A549 (cell line): ENCODE measurements at regions of chr22 and their contacts with region 1.

Region 1: GRCh38 chr22:46367707-46368191 is 32.2 kb downstream of the TRMU start:
- DNase-seq: peak; percentile 64
- ATAC-seq: peak; percentile 75 to 93
- H3K4me3 ChIP-seq: no peak overlapping the region
- H3K27ac ChIP-seq: peak overlapping the region; percentile 48 to 80; a peak in 5 of 6 replicates
- H3K4me1 ChIP-seq: peaks cover 19% of the 10 kb centered on the region
- CTCF ChIP-seq: peak; percentile 70
- EP300 ChIP-seq: no peak
- POLR2A ChIP-seq: no peak
- RAD21 ChIP-seq: peak; percentile 82 to 83

Region 2: GRCh38 chr22:46267431-46268279 is 100.1 kb before region 1 on chr22 and contains the start of gene TTC38:
- CTCF ChIA-PET with region 1: no interaction called
- POLR2A ChIA-PET with region 1: no interaction called
- DNase-seq: peak; percentile 77 to 87
- ATAC-seq: peak; percentile 98
- H3K4me3 ChIP-seq: peak within 1 kb of the TSS; percentile 76
- H3K27ac ChIP-seq: peak within 1 kb of the TSS; percentile 82 to 95
- H3K4me1 ChIP-seq: peaks cover 18% of the 10 kb centered on the region; the same call in 1 of the 3 replicates
- CTCF ChIP-seq: no peak
- EP300 ChIP-seq: no peak
- POLR2A ChIP-seq: peak; percentile 53
- RAD21 ChIP-seq: no peak
- polyA plus RNA-seq, gene TTC38: 12.4 and 17.3 TPM in 2 replicates

Region 3: DNA sequence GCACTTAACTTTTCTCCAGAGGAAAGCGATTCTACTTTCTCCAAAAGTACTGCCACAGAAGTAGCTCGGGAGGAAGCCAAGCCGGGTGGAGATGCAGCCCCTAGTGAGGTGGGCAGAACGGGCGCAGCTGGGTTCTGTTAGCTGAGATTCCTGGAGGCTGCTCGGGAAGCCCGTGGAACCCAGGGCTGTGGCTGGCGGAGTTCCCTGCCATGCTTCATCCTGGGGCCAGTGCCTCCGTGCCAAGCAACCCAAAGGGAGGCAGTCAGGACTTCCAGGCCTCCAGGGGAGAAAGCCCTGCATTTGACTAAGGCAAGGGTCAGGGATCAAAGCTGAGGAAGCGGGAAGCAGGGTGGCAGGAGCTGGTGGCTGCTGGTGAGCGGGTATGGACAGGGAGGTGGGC is 39.0 kb before region 1 on chr22:
- CTCF ChIA-PET with region 1: no interaction called
- POLR2A ChIA-PET with region 1: no interaction called
- DNase-seq: no peak
- ATAC-seq: no peak
- H3K4me3 ChIP-seq: no peak overlapping the region
- H3K27ac ChIP-seq: no peak overlapping the region
- H3K4me1 ChIP-seq: no peaks in the 10 kb centered on the region
- CTCF ChIP-seq: no peak
- EP300 ChIP-seq: no peak
- POLR2A ChIP-seq: no peak
- RAD21 ChIP-seq: no peak

Region 4: GRCh38 chr22:46377566-46378425 is 10.0 kb after region 1 on chr22:
- CTCF ChIA-PET with region 1: interaction called, 18 read pairs
- POLR2A ChIA-PET with region 1: no interaction called
- DNase-seq: peak; percentile 89 to 92
- ATAC-seq: peak; percentile 74 to 82
- H3K4me3 ChIP-seq: no peak overlapping the region
- H3K27ac ChIP-seq: peak overlapping the region; percentile 91 to 93
- H3K4me1 ChIP-seq: peaks cover 51% of the 10 kb centered on the region
- CTCF ChIP-seq: no peak
- EP300 ChIP-seq: peak; percentile 23 to 69; a peak in 2 of 5 replicates
- POLR2A ChIP-seq: no peak
- RAD21 ChIP-seq: no peak

Region 5: GRCh38 chr22:46437671-46438440 is 70.1 kb after region 1 on chr22:
- CTCF ChIA-PET with region 1: interaction called, 12 read pairs
- POLR2A ChIA-PET with region 1: no interaction called
- DNase-seq: no peak
- ATAC-seq: no peak
- H3K4me3 ChIP-seq: no peak overlapping the region
- H3K27ac ChIP-seq: no peak overlapping the region
- H3K4me1 ChIP-seq: peaks cover 8% of the 10 kb centered on the region; the same call in 1 of the 3 replicates
- CTCF ChIP-seq: no peak
- EP300 ChIP-seq: no peak
- POLR2A ChIP-seq: no peak
- RAD21 ChIP-seq: no peak

Region 6: GRCh38 chr22:46528121-46528610 is 160.4 kb after region 1 on chr22:
- CTCF ChIA-PET with region 1: interaction called, 46 read pairs
- POLR2A ChIA-PET with region 1: interaction called, 8 read pairs
- DNase-seq: peak; percentile 84 to 93
- ATAC-seq: peak; percentile 83 to 86
- H3K4me3 ChIP-seq: 0 out of 3 replicates have a peak overlapping the region, but pooled peaks have one; percentile 22
- H3K27ac ChIP-seq: peak overlapping the region; percentile 91 to 99
- H3K4me1 ChIP-seq: peaks cover 85% of the 10 kb centered on the region
- CTCF ChIP-seq: no peak
- EP300 ChIP-seq: peak; percentile 65 to 78; a peak in 3 of 5 replicates
- POLR2A ChIP-seq: no peak
- RAD21 ChIP-seq: peak; percentile 8 to 25; a peak in 1 of 5 replicates

Region 7: DNA sequence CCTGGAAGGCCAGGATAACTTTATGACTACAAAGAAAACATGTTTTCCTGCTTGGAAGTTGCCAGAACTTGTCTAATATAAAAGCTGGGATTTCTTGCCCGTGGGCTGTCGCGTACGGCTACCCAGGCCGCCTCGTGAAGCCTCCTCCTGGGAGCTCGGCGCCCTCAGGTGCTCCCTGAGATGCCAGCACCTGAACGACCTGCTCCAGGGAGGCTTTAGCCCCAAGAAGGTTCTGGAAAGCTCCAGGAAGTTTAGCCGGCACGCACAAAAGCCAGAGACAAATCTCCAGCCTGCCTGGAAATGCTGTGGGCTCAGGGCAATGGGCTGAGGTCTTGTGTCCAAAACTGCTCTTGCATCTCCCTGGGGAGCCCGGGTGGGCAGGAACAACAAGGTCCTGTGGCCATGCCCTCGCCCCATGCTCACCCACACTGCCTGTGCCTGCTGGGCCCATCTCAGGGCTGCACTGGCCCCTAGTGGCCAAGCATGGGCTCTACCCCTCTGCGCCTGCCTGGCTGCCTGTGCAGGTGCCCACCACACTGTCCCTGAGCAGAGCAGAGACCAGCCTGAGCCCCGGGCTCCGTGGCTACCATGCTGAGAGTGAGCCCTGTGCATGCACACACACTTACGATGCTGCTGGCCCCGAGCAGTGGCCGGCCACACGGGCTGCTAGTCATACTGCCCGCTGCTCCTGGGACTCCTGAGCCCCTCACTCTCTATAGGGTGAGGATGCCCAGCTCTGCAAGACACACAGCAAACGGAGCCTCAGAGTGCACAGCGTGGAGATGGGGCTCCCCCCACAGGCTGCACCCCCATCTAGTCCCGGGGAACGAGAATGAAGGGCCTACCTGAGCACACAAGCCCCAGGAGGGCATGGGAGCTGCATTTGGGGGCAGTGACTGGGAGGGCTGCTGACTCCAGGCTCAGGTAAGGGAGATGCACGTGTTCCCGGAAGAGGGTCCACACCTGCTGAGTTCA is 174.5 kb after region 1 on chr22:
- CTCF ChIA-PET with region 1: interaction called, 171 read pairs
- POLR2A ChIA-PET with region 1: interaction called, 3 read pairs
- DNase-seq: peak; percentile 72 to 83
- ATAC-seq: peak; percentile 87 to 93
- H3K4me3 ChIP-seq: no peak overlapping the region
- H3K27ac ChIP-seq: peak overlapping the region; percentile 47 to 78; a peak in 5 of 6 replicates
- H3K4me1 ChIP-seq: peaks cover 41% of the 10 kb centered on the region
- CTCF ChIP-seq: peak; percentile 81
- EP300 ChIP-seq: no peak
- POLR2A ChIP-seq: no peak
- RAD21 ChIP-seq: peak; percentile 94 to 95